SK-N-SH (cell line): ENCODE measurements at regions of chr6 and their contacts with region 1.

Region 1: DNA sequence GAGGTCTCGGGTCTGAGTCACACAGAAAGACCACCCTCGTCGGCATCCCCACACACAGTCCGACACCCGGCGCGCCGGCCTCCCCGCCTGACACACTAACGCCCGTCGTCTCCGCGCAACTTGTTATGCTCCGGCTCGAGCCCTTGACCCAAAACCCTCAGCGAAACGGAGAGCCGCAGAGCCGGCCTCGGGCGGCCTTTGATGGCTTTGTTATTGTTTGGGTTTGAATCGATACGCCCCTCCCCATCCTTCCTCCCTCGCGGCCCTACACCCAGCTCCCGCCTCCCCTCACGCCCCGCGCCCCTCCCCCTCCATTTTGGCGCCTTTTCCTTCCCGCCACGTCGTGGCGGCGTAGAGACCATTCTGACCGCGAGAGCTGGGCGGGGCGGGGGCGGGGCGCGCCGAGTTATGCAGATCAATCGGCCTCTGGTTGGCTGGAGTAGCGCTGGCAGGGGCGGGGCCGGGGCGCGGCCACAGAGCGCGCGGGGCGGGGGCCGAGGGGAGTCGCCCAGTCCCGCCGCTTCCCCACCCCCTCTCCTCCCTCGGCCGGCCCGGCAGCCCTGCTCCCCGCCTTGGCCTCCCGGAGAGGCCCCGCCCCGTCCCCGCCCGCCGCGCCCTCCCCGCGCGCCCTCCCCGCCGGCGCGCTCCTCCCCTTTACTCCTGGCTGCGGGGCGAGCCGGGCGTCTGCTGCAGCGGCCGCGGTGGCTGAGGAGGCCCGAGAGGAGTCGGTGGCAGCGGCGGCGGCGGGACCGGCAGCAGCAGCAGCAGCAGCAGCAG is at the start of gene PIM1:
- DNase-seq: peak; percentile 99
- H3K4me3 ChIP-seq: peak within 1 kb of the TSS; percentile 89 to 93
- H3K27ac ChIP-seq: peak within 1 kb of the TSS; percentile 88 to 95
- H3K4me1 ChIP-seq: peaks cover 4 to 19% of the 10 kb centered on the region in 2 experiments; a peak in 3 of 4 replicates
- H3K27me3 ChIP-seq: no peaks in the 10 kb centered on the region
- CTCF ChIP-seq: no peak
- EP300 ChIP-seq: peak in 1 of 2 experiments; percentile 31; a peak in 1 of 4 replicates
- RAD21 ChIP-seq: no peak
- polyA plus RNA-seq, gene PIM1: 33.9 and 35.3 TPM in 2 replicates

Region 2: GRCh38 chr6:36533321-36533720 is 636.4 kb before region 1 on chr6:
- CTCF ChIA-PET with region 1: no interaction called
- POLR2A ChIA-PET with region 1: no interaction called
- DNase-seq: no peak
- H3K4me3 ChIP-seq: no peak overlapping the region
- H3K27ac ChIP-seq: no peak overlapping the region
- H3K4me1 ChIP-seq: no peaks in the 10 kb centered on the region
- H3K27me3 ChIP-seq: no peaks in the 10 kb centered on the region
- CTCF ChIP-seq: no peak
- EP300 ChIP-seq: no peak
- RAD21 ChIP-seq: no peak

Region 3: GRCh38 chr6:37029249-37029971 is 140.3 kb before region 1 on chr6:
- CTCF ChIA-PET with region 1: interaction called, 418 read pairs
- POLR2A ChIA-PET with region 1: interaction called, 5 read pairs
- DNase-seq: peak; percentile 86
- H3K4me3 ChIP-seq: no peak overlapping the region; a peak in 1 of 4 replicates
- H3K27ac ChIP-seq: no peak overlapping the region
- H3K4me1 ChIP-seq: peaks cover 0 to 5% of the 10 kb centered on the region in 2 experiments; a peak in 2 of 4 replicates
- H3K27me3 ChIP-seq: no peaks in the 10 kb centered on the region
- CTCF ChIP-seq: peak; percentile 71
- EP300 ChIP-seq: no peak
- RAD21 ChIP-seq: peak; percentile 86

Region 4: GRCh38 chr6:37068356-37069270 is 101.1 kb before region 1 on chr6:
- CTCF ChIA-PET with region 1: interaction called, 10 read pairs
- POLR2A ChIA-PET with region 1: no interaction called
- DNase-seq: no peak
- H3K4me3 ChIP-seq: no peak overlapping the region
- H3K27ac ChIP-seq: no peak overlapping the region
- H3K4me1 ChIP-seq: peaks cover 0 to 8% of the 10 kb centered on the region in 2 experiments; a peak in 1 of 4 replicates
- H3K27me3 ChIP-seq: no peaks in the 10 kb centered on the region
- CTCF ChIP-seq: no peak
- EP300 ChIP-seq: no peak
- RAD21 ChIP-seq: no peak

Region 5: DNA sequence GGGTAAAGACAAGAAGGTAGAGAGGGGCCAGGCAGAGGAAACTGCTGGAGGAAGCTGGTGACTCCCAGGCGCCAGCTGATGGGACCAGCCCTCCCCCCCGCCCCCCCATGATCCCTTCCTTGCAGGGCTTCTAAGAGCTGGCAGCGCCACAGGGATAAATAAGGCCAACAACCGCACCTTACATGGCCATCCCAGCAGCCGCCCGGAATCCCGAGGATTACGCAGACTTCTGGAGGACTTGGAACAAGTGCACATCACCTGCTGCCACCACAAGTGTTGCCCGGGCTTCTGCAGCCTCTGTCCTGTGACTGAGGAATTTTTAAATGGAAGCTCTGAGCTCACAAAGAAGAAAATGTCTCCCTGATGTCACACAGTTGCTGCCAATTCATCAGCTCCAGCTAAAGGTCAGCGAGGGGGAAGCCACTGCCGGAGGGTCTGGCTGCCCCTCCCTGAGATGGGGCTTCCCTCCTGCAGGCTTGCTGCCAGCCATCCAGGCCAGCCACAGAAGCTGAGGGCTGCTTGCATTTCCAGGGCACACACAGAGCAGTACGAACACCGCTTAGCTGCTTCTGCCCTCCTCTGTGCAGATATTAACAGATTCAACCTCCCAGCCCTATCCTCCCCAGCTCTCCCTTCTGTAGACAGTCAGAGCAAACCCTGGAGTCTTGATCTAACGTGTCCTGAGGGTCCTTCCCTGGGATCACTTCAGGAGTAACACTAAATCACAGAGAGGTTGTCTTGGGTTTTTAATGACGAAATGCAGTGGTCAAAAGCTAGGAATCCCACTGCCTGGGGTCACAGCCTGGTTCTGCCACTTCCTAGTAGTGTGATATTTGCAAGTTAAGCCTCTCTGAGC is 38.4 kb before region 1 on chr6:
- CTCF ChIA-PET with region 1: interaction called, 30 read pairs
- POLR2A ChIA-PET with region 1: interaction called, 17 read pairs
- DNase-seq: peak; percentile 85
- H3K4me3 ChIP-seq: no peak overlapping the region
- H3K27ac ChIP-seq: peak overlapping the region in 1 of 2 experiments; percentile 72; a peak in 2 of 4 replicates
- H3K4me1 ChIP-seq: peaks cover 18 to 30% of the 10 kb centered on the region in 2 experiments; a peak in 3 of 4 replicates
- H3K27me3 ChIP-seq: no peaks in the 10 kb centered on the region
- CTCF ChIP-seq: no peak
- EP300 ChIP-seq: no peak; a peak in 1 of 4 replicates
- RAD21 ChIP-seq: peak; percentile 60

Region 6: GRCh38 chr6:37200085-37200484 is 30.4 kb after region 1 on chr6:
- CTCF ChIA-PET with region 1: interaction called, 15 read pairs
- POLR2A ChIA-PET with region 1: no interaction called
- DNase-seq: no peak
- H3K4me3 ChIP-seq: no peak overlapping the region
- H3K27ac ChIP-seq: no peak overlapping the region
- H3K4me1 ChIP-seq: no peaks in the 10 kb centered on the region
- H3K27me3 ChIP-seq: no peaks in the 10 kb centered on the region
- CTCF ChIP-seq: no peak
- EP300 ChIP-seq: no peak
- RAD21 ChIP-seq: no peak

Region 7: DNA sequence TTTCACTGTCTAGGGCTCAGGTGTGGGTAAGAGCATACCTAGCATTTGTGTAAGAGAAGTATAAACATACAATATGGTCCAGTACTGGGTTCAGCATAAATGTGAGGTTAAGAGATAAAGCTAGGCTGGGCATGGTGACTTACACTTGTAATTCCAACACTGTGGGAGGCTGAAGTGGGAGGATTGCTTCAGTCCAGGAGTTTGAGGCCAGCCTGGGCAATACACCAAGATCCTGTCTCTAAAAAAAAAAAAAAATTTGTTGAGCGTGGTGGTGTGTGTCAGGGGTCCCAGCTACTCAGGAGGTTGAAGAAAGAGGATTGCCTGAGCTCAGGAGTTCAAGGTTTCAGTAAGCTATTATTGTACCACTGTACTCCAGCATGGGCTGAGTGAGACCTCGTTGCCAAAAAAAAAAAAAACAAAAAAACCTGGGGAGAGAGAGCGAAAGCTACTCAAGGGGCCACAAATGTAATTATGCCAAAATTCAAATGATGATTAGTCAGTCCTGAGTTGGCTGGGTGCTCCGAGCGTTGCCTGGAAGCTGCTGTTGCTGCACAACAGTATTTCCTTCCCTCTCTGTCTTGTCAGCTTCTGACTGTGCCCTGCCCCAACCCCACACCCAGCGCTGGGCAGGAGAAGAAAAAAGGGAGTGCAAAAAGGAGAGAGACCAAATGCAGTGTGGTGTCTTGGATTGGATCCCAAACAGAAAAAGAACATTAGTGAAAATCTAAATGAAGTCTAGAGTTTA is 287.3 kb after region 1 on chr6:
- CTCF ChIA-PET with region 1: no interaction called
- POLR2A ChIA-PET with region 1: no interaction called
- DNase-seq: no peak
- H3K4me3 ChIP-seq: no peak overlapping the region
- H3K27ac ChIP-seq: peak overlapping the region; percentile 4 to 72; a peak in 3 of 4 replicates
- H3K4me1 ChIP-seq: peaks cover 16 to 75% of the 10 kb centered on the region in 2 experiments; a peak in 3 of 4 replicates
- H3K27me3 ChIP-seq: no peaks in the 10 kb centered on the region
- CTCF ChIP-seq: no peak
- EP300 ChIP-seq: no peak
- RAD21 ChIP-seq: no peak

Region 8: DNA sequence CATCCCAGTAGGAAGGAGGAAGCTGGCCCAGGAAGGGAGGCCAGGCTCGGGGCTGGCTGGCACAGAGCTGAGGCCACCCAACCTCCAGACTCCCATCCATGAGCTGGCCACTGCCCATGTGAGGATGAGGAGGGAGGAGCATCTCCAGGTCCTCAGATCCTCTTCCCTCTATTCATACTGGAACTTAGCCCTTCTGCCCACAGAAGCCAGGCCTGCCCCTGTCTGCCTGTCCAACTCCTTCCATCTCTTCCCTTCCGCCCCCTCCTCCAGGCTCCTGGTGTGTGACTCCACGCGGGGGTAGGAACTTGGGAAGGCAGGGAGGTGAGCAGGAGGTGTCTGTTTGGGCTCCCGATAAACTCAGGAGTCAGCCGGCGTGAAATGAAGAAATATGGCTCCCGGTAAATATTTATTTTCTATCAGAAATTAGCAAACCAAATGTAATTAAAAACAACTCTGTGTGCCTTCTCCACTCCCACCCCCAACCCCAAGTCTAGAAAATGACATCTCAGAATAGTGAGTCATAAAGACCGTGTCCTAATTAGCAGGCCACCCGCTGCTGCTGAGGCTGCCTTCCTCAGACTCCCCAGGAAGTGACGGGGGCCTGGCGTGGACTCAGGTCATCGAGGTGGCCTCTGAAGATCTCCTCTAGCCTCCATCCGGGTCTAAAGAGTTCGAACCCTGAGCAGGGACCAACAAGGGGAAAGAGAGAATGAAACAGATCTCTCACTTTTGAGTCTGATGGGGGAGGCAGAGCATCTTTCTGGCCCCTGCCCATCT is 446.1 kb after region 1 on chr6:
- CTCF ChIA-PET with region 1: no interaction called
- POLR2A ChIA-PET with region 1: no interaction called
- DNase-seq: no peak
- H3K4me3 ChIP-seq: no peak overlapping the region
- H3K27ac ChIP-seq: no peak overlapping the region
- H3K4me1 ChIP-seq: peaks cover 7 to 20% of the 10 kb centered on the region in 2 experiments; a peak in 3 of 4 replicates
- H3K27me3 ChIP-seq: no peaks in the 10 kb centered on the region
- CTCF ChIP-seq: no peak
- EP300 ChIP-seq: no peak
- RAD21 ChIP-seq: no peak